Psoas muscle (tissue), 8 donors: ENCODE measurements at regions of chr11 and their contacts with region 1.

Region 1: GRCh38 chr11:126354631-126355323 is 709 bp upstream of the ST3GAL4 start:
- DNase-seq: no peak
- ATAC-seq: peak in 3 of 4 donors; percentile 2 to 5 (median 4)
- H3K4me3 ChIP-seq: peak overlapping the region; percentile 79
- H3K27ac ChIP-seq: peak overlapping the region; percentile 58
- H3K4me1 ChIP-seq: peaks cover 44% of the 10 kb centered on the region
- H3K27me3 ChIP-seq: no peaks in the 10 kb centered on the region
- CTCF ChIP-seq: no peak

Region 2: DNA sequence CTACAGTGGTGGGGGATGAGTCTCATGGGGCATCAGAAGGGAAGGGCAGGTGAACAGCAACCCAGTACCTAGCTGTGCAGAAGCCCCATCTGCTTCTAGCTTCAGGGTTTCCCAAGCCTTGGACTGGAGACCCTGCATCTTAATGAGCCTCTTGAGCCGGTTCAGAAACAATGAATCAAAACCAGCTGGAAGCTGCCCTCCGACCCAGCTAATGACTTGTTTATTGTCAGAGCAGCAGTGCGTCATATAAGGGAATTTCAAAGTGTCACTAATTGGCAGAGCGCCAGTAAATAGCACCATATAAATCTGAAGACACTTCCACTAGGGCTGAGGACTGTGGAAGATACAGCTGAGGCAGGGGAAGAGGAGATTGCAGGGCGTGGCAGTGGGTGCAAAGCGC is 200.8 kb before region 1 on chr11:
- intact Hi-C with region 1: no loop called
- DNase-seq: no peak
- ATAC-seq: no peak
- H3K4me3 ChIP-seq: no peak overlapping the region
- H3K27ac ChIP-seq: no peak overlapping the region
- H3K4me1 ChIP-seq: no peaks in the 10 kb centered on the region
- H3K27me3 ChIP-seq: peaks cover 0 to 3% (median 0%) of the 10 kb centered on the region in 3 donors
- CTCF ChIP-seq: no peak

Region 3: DNA sequence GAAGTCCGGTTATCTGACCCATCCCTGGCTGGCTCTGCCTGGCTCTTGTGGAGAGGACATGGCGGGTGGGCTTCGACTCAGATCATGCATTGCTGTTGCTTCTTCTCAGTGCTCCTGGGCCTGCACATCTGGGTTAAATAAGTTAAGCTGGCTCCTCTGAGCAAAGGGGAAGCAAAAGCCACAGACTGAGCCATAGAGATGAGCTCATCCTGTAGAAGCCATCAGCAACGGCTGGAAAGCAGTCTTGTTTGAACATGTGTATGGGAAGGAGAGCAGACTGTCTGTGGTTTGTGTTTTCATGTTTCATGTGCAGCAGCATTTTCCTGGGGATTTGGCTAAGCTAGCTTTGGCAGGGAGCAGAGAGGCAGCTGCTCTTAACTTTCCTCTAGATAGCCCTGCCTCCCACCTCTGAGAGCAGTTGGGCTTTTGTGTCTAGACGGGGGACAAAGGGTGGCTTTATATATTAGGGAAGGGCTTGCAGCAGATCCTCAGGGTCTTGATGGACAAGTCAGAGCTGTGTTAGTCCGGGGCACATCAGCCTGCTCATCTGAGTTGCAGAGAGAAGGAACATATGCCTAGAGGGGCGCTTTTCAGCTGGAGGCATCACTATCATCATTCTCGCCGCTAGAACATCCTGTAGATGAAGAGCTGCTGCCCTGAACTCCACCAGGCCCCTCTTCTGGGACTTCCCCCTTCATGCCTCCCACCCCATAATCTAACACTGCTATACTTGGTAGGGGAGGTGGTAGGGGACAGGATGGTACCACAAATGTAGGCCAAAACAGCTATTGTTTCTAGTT is 36.0 kb before region 1 on chr11:
- intact Hi-C with region 1: loop called in 1 of 2 experiments (anchors 5 kb)
- DNase-seq: no peak
- ATAC-seq: peak; percentile 57 to 85 (median 69)
- H3K4me3 ChIP-seq: peak overlapping the region; percentile 14
- H3K27ac ChIP-seq: peak overlapping the region; percentile 77
- H3K4me1 ChIP-seq: peaks cover 22% of the 10 kb centered on the region
- H3K27me3 ChIP-seq: no peaks in the 10 kb centered on the region
- CTCF ChIP-seq: no peak